ENCODE measurements at regions of chr17 and their contacts with region 1.

Region 1: DNA sequence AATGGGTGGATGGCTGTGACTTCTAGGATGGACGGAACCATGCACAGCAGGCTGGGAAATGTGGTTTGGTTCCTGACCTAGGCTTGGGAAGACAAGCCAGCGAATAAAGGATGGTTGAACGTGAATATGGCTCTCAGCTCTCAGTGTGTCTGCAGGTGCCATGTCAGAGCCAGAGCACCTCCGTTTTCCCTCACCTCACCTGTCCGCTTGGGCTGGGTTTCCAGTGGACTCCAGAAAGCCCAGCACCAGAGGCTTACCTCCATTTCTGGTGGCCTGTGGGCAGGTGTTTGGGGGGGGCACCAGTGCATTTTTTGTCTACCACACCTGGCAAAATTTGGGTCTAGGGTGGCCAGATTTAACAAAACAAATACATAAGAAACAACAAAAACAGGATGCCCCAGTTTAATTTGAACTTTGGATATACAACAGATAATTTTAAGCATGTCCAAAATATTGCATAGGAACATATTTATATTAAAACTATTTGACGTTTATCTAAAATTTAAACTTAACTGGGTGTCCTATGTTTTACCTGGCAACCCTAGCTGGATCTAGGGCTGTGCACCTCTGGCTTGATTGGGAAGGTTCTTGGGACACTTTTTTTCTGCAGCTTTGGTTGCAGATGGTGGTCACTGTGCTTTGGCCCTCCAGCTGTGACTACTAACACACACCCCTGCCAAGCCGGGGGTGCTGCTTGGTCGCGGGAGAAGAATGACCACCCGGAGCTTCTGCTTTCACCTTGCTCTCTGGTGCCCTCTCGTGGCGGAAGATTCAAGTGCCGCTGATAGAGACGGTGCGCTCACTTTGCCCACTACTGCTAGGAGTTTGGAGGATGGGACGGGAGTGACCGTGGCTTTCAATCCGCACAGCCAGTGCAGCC is 6.3 kb downstream of the SPACA3 start:
- DNase-seq: peak; percentile 33
- H3K4me3 ChIP-seq: peak overlapping the region; percentile 18
- H3K27ac ChIP-seq: peak overlapping the region; percentile 11
- H3K27me3 ChIP-seq: peaks cover 14% of the 10 kb centered on the region
- CTCF ChIP-seq: peak; percentile 92

Region 2: DNA sequence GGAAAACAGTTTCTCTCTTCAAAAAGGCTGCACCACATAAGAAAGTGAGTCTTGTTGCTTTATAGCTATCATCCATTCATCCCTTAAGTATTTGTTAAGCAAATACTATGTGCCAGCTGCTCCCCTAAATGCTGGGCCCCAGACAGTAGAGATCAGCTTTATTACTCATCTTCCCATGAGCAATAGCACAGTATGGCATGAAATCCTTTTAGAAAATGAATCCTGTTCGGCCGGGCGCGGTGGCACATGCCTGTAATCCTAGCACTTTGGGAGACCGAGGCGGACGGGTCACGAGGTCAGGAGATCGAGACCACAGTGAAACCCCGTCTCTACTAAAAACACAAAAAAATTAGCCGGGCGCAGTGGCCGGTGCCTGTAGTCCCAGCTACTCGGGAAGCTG is 220.6 kb before region 1 on chr17:
- CTCF ChIA-PET with region 1: interaction called, 85 read pairs
- POLR2A ChIA-PET with region 1: no interaction called
- DNase-seq: no peak
- H3K4me3 ChIP-seq: no peak overlapping the region
- H3K27ac ChIP-seq: no peak overlapping the region
- H3K27me3 ChIP-seq: no peaks in the 10 kb centered on the region
- CTCF ChIP-seq: no peak

Region 3: DNA sequence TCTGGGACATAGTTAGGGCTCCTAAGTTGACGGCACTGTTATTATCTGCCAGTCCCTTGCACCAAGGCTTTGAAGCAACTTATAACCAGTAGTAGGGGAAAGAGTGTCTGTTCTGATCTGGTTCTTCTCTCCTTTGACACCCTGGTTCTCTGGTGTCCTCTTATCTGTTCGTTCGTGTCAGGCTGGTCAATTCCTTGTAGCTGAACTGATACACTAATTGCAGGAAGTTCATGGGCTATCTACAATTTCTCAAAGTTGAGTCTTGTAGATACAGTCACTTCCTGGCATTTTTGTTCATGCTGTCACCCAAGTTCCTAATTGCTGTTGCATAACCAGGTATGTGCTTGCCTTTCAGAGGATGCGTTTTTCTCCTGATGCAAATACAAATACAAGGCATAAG is 103.7 kb before region 1 on chr17:
- CTCF ChIA-PET with region 1: no interaction called
- POLR2A ChIA-PET with region 1: no interaction called
- DNase-seq: no peak
- H3K4me3 ChIP-seq: no peak overlapping the region
- H3K27ac ChIP-seq: no peak overlapping the region
- H3K27me3 ChIP-seq: no peaks in the 10 kb centered on the region
- CTCF ChIP-seq: no peak

Region 4: GRCh38 chr17:32936894-32937500 is 61.0 kb before region 1 on chr17:
- CTCF ChIA-PET with region 1: interaction called, 11 read pairs
- POLR2A ChIA-PET with region 1: no interaction called
- DNase-seq: peak; percentile 42
- H3K4me3 ChIP-seq: no peak overlapping the region
- H3K27ac ChIP-seq: peak overlapping the region; percentile 39
- H3K27me3 ChIP-seq: no peaks in the 10 kb centered on the region
- CTCF ChIP-seq: peak; percentile 76

Region 5: GRCh38 chr17:32970281-32970680 is 27.7 kb before region 1 on chr17:
- CTCF ChIA-PET with region 1: no interaction called
- POLR2A ChIA-PET with region 1: no interaction called
- DNase-seq: no peak
- H3K4me3 ChIP-seq: no peak overlapping the region
- H3K27ac ChIP-seq: no peak overlapping the region
- H3K27me3 ChIP-seq: no peaks in the 10 kb centered on the region
- CTCF ChIP-seq: no peak

Region 6: GRCh38 chr17:33012522-33013033 is 14.6 kb after region 1 on chr17:
- CTCF ChIA-PET with region 1: interaction called, 43 read pairs
- POLR2A ChIA-PET with region 1: interaction called, 3 read pairs
- DNase-seq: peak; percentile 90
- H3K4me3 ChIP-seq: no peak overlapping the region
- H3K27ac ChIP-seq: peak overlapping the region; percentile 94
- H3K27me3 ChIP-seq: no peaks in the 10 kb centered on the region
- CTCF ChIP-seq: no peak

Region 7: DNA sequence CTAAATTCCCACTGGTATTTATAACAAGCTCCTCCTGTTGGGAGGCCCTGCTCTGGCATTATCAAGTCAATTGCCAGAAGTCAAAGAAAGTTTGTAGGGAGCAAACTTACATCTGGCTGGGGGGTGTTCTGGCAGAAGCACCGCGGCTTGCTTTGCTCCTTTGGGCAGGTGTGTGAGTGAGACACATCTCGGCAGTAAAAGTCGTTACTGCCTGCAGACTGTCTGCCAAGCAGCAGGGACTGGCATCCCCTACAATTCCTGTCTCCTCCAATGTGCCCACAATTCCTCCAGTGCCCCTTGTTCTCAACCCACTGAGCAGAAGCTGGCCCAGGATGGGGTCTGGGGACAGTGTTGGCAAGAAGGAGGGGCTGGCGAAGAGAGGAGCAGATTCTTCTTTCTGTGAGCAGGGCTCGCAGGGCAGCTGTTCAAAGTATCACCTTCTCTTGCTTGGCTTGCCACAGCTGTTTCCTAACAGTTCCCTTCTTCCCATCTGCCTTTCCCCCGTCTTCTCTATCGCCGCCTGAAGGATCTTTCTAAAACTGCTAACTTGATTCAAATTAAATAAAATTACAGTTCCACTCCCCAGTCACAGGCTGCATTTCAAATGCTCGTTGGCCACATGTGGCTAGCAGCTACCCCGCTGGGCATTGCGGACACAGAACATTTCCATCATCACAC is 23.9 kb after region 1 on chr17:
- CTCF ChIA-PET with region 1: interaction called, 15 read pairs
- POLR2A ChIA-PET with region 1: no interaction called
- DNase-seq: no peak
- H3K4me3 ChIP-seq: no peak overlapping the region
- H3K27ac ChIP-seq: no peak overlapping the region
- H3K27me3 ChIP-seq: peaks cover 28% of the 10 kb centered on the region
- CTCF ChIP-seq: peak; percentile 31

Region 8: GRCh38 chr17:33049781-33050414 is 51.9 kb after region 1 on chr17:
- CTCF ChIA-PET with region 1: interaction called, 10 read pairs
- POLR2A ChIA-PET with region 1: no interaction called
- DNase-seq: no peak
- H3K4me3 ChIP-seq: no peak overlapping the region
- H3K27ac ChIP-seq: no peak overlapping the region
- H3K27me3 ChIP-seq: peaks cover 10% of the 10 kb centered on the region
- CTCF ChIP-seq: peak; percentile 96

Measured in AG04450 (cell line).